MCF 10A (cell line): ENCODE measurements at regions of chrX and their contacts with region 1.

Region 1: DNA sequence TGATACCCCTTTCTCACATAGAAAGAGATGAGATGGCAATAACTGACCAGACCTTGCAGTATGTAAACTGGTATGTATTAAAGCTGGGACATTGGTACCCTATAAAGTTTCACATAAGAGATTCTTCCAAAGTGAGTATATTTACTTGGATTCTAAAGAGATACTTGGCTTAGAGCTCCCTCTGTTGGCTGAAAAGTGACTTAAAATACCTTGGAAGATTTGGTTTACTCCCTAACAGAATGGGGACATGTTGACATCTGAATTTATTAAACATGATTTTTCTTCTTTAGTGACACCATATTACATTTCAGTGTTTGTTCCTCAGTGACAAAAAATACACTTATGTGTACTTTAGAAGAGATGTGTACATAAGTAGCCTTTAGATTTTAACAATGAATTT is 47.9 kb upstream of the RGN start:
- DNase-seq: peak; percentile 77
- H3K4me3 Mint-ChIP-seq: no peak overlapping the region
- H3K27ac Mint-ChIP-seq: no peak overlapping the region
- H3K4me1 Mint-ChIP-seq: no peaks in the 10 kb centered on the region
- H3K27me3 Mint-ChIP-seq: peaks cover 45% of the 10 kb centered on the region
- CTCF ChIP-seq: peak; percentile 60

Region 2: DNA sequence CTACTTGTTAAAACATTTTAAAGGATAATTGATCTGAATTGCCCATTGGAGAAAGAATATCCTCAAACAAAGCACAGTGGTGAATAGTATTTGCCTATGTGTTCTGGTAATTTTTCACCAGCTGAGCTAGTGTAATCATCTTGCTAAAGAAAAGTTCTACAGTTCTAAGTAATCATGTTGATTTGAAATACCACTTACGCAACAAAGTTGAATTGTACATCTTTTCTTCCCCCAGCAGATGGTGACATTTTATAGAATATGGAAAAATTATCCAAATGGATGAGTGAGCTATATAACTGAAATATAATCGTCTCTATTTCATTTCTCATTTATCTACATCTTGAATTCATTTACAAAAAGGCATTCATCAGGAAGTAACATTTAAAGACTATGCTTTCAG is 475.4 kb before region 1 on chrX:
- CTCF ChIA-PET with region 1: no interaction called
- POLR2A ChIA-PET with region 1: no interaction called
- intact Hi-C with region 1: loop called (anchors 5 kb)
- DNase-seq: no peak
- H3K4me3 Mint-ChIP-seq: no peak overlapping the region
- H3K27ac Mint-ChIP-seq: no peak overlapping the region
- H3K4me1 Mint-ChIP-seq: no peaks in the 10 kb centered on the region
- H3K27me3 Mint-ChIP-seq: peaks cover 24% of the 10 kb centered on the region
- CTCF ChIP-seq: peak; percentile 28

Region 3: DNA sequence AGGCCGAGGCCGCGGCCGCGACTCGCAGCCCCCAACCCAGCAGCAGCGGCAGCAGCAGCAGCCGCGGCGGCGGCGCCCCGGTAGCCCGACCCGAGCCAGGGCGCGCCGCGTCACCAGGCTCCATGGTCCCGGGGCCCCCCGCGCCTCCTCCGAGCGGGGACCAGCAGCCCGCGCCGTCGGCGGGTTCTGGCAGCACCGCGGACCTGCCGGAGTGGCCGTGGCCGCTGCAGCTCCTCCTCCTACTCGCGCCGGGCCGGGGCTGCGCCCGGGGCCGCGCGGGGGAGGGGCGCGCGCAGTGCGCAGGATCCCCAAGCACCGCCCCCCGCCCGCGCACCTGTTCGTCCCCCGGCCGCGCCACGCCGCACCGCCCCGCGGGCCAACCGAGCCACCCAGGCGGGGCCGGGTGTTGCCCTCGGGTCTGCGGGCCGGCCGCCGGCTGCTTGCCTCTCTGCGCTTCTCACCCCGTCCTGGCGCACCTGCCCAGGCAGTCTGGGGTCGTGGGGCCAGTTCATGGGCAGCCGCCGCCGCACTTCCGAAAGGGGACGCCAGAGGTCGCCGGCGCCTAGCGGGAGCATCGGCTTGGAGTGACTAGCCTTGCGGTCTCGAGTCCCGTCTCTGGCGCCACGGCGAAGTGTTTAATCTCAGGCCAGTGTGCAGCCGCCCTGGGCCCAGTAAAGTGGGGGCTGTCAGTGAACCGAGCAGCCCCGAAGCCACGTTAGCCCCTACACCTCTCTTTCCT is 271.3 kb before region 1 on chrX and contains the start of gene SLC9A7:
- CTCF ChIA-PET with region 1: interaction called, 5 read pairs
- POLR2A ChIA-PET with region 1: no interaction called
- intact Hi-C with region 1: loop called (anchors 1 kb)
- DNase-seq: peak; percentile 75
- H3K4me3 Mint-ChIP-seq: peak within 1 kb of the TSS; percentile 74
- H3K27ac Mint-ChIP-seq: peak within 1 kb of the TSS; percentile 24
- H3K4me1 Mint-ChIP-seq: no peaks in the 10 kb centered on the region
- H3K27me3 Mint-ChIP-seq: no peaks in the 10 kb centered on the region
- CTCF ChIP-seq: peak; percentile 75
- total RNA-seq, gene SLC9A7: 28.3 and 29.3 TPM in 2 replicates

Region 4: DNA sequence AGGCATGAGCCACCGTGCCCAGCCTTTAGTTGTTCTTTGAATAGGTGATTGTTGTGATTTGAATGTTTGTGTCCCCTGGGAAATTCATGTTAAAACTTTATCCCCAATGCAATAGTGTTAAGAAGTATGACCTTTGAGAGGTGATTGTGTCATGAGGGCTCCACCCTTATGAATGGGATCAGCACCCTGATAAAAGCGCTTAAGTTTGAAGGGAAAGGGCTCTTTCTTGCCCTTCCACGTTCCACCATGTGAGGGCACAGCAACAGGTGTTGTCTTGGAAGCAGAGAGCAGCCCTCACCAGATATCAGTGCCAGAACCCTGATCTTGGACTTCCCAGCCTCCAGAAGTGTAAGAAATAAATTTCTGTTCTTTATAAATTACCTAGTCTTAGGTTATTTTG is 227.2 kb before region 1 on chrX:
- CTCF ChIA-PET with region 1: interaction called, 3 read pairs
- POLR2A ChIA-PET with region 1: no interaction called
- intact Hi-C with region 1: loop called (anchors 1 kb)
- DNase-seq: peak; percentile 37
- H3K4me3 Mint-ChIP-seq: no peak overlapping the region
- H3K27ac Mint-ChIP-seq: no peak overlapping the region
- H3K4me1 Mint-ChIP-seq: no peaks in the 10 kb centered on the region
- H3K27me3 Mint-ChIP-seq: peaks cover 41% of the 10 kb centered on the region
- CTCF ChIP-seq: peak; percentile 33

Region 5: DNA sequence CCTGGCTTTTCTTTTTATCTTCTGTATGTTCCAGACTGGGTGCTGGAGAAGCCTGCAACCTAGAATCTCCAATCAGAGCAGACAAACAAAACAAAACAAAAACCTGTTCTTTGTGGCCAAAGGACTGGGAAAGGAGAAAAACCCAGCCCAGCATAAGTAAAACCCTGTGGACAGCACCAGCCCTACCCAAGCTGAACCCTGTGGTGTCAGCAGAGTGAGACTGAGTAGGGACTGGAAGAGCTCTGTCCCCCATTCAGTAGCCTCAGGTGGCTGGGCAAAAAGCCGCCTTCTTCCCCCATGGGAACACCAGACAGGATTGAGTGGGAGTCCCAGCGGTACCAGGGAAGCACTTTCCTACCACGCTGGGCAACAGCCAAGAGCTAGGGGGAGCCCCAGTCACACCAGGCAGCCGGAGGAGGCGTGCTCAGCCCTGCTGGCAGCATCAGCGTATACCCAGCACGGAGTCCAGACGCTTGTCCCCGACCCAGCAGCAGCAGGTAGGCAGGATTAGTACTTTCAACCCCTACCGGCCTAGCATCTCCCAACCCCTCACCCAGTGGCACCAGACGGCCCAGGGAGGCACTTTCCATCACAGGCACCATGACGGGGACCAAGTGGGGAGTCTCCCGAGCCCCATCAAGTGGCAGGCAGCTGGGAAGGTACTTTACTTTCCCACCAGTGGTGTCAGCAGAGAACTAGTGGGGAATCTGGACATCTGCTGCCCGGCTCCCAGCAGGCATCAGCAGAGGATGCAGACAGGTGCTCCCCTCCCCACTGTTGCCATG is 126.7 kb before region 1 on chrX:
- CTCF ChIA-PET with region 1: interaction called, 25 read pairs
- POLR2A ChIA-PET with region 1: interaction called, 3 read pairs
- intact Hi-C with region 1: loop called (anchors 1 kb)
- DNase-seq: peak; percentile 81
- H3K4me3 Mint-ChIP-seq: peak overlapping the region; percentile 70
- H3K27ac Mint-ChIP-seq: no peak overlapping the region
- H3K4me1 Mint-ChIP-seq: no peaks in the 10 kb centered on the region
- H3K27me3 Mint-ChIP-seq: peaks cover 59% of the 10 kb centered on the region
- CTCF ChIP-seq: peak; percentile 42

Region 6: DNA sequence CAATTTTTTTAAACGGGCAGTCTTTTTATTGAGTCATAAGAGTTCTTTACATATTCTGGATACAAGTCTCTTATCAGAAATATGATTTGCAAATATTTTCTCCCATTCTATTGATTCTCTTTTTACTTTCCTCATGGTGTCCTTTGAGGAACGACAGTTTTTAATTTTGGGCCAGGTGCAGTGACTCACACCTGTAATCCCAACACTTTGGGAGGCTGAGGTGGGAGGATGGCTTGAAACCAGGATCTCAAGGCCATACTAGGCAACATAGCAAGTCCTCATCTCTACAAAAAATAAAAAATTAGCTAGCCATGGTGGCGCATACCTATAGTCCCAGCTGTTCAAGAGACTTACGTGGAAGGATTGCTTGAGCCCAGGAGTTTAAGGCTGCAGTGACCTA is 18.2 kb before region 1 on chrX:
- CTCF ChIA-PET with region 1: interaction called, 16 read pairs
- POLR2A ChIA-PET with region 1: interaction called, 3 read pairs
- intact Hi-C with region 1: no loop called
- DNase-seq: no peak
- H3K4me3 Mint-ChIP-seq: no peak overlapping the region
- H3K27ac Mint-ChIP-seq: no peak overlapping the region
- H3K4me1 Mint-ChIP-seq: no peaks in the 10 kb centered on the region
- H3K27me3 Mint-ChIP-seq: peaks cover 47% of the 10 kb centered on the region
- CTCF ChIP-seq: no peak

Region 7: DNA sequence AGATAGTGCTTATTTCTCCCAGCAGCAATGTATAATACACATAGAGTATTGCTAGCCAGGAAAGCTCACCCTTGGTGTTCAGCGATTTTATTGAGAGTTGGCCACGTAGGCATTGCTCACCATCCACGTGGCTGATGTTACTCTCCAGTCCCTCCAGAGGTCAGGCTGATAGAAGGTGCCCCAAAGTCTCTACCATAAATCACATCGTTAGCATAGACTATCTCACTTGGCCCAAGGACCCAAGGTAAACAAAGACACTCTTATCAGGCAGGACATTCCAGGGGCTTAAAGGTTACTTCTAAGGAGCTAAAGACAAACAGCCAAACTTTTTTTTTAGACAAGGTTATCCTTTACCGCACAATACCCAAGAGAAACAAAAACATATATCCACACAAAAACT is 17.6 kb after region 1 on chrX:
- CTCF ChIA-PET with region 1: interaction called, 21 read pairs
- POLR2A ChIA-PET with region 1: no interaction called
- intact Hi-C with region 1: no loop called
- DNase-seq: no peak
- H3K4me3 Mint-ChIP-seq: no peak overlapping the region
- H3K27ac Mint-ChIP-seq: no peak overlapping the region
- H3K4me1 Mint-ChIP-seq: no peaks in the 10 kb centered on the region
- H3K27me3 Mint-ChIP-seq: peaks cover 37% of the 10 kb centered on the region
- CTCF ChIP-seq: no peak

Region 8: GRCh38 chrX:47430925-47431324 is 400.6 kb after region 1 on chrX:
- CTCF ChIA-PET with region 1: no interaction called
- POLR2A ChIA-PET with region 1: no interaction called
- intact Hi-C with region 1: no loop called
- DNase-seq: no peak
- H3K4me3 Mint-ChIP-seq: no peak overlapping the region
- H3K27ac Mint-ChIP-seq: no peak overlapping the region
- H3K4me1 Mint-ChIP-seq: no peaks in the 10 kb centered on the region
- H3K27me3 Mint-ChIP-seq: no peaks in the 10 kb centered on the region
- CTCF ChIP-seq: no peak